Upper lobe of right lung (tissue), 1 donor: ENCODE measurements at regions of chr1 and their contacts with region 1.

Region 1: DNA sequence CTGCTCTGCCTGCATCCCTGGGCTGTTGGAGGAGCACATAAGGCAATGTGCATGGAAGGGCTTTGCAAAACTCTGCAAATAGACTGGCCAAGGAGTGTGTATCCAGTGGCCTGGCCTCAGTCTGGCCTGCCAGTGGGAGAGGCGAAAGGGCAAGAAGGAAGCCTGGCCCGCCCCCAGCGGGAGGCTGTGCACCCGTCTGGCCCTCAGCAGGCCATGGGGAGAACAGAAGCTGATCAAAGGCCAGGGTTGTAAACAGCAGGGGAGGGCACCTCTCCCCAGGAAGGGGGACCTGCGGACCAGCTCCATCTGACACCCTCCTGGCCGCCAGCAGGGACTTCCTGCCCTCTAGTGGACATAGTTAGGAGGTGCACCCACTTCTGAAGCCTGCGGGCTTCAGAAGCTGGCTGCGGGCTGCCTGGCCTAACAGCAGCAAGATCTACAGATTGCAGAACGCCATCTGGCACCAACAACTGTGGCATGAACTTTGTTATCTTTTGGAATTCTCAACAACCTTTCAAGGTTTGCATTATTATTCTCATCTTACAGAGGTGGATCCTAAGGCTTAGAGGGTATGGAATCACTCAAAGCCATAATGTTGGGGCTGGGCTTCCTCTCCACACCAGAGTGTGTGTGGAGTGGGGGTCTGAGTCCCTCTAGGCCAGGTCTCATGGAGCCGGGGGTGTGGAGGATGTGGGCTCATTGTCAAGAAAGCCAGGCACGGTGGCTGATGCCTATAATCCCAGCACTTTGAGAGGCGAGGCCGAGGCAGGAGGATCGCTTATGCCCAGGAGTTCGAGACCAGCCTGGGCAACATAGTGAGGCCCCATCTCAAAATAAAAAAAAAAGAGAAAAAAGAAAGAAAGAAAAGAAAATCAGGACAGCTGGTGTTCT is 18.9 kb upstream of the CDK18 start:
- DNase-seq: peak; percentile 77
- ATAC-seq: peak; percentile 91
- H3K4me3 ChIP-seq: no peak overlapping the region
- H3K27ac ChIP-seq: no peak overlapping the region
- H3K4me1 ChIP-seq: peaks cover 2% of the 10 kb centered on the region
- H3K27me3 ChIP-seq: peaks cover 25% of the 10 kb centered on the region
- CTCF ChIP-seq: peak; percentile 97

Region 2: DNA sequence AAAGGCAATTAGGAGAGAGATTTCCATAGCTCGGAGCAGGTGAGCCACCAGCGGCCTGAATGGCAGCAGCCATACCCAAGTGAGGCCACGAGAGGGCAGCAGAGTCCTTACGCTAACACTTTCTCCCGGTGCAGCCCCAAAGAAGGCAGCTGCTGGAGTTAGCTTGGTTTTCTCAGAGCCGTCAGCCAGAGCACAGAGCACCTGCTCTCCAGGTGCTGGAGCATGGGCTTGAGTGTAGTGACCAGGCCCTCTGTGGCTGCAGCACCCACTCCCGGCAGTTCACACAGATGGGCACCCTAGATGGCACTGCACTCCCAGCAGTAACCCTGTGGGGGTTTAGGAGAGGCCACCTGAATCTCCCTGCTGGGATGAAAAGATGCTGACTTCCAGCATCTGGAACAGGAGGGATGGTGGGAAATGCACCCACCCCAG is 212.0 kb before region 1 on chr1:
- intact Hi-C with region 1: loop called (anchors 10 kb)
- DNase-seq: peak; percentile 90
- ATAC-seq: peak; percentile 90
- H3K4me3 ChIP-seq: no peak overlapping the region
- H3K27ac ChIP-seq: no peak overlapping the region
- H3K4me1 ChIP-seq: peaks cover 16% of the 10 kb centered on the region
- H3K27me3 ChIP-seq: no peaks in the 10 kb centered on the region
- CTCF ChIP-seq: peak; percentile 99

Region 3: DNA sequence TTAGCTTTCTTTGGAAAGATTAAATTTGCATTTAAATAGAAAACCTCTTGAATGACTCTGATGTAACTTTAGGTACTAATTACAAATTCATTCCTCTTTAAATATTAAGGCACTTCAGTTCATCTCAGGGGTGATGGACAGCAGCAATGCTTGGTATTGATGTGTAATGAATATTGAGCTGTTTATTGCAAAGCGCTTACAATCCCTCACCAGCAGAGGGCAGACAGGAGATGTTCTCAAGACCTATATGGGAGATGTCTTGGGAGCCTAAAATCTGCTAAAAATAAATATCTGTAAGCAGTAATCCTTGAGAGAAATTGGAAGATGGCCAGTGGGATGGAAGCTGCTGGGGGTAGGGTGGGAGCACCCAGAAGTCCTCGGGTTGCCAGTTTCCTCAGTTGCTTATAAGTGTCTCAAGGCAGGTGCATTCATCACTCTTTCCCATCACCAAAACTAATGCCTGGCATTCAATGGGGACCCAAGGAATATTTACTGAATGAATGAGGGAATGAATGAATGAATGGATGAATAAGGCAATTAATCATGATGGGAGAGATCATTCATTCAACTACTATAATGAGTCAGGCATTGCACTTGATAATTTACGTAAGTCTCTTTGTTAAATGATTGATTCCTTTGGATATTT is 131.2 kb before region 1 on chr1:
- intact Hi-C with region 1: loop called (anchors 10 kb)
- DNase-seq: no peak
- ATAC-seq: peak; percentile 62
- H3K4me3 ChIP-seq: no peak overlapping the region
- H3K27ac ChIP-seq: no peak overlapping the region
- H3K4me1 ChIP-seq: no peaks in the 10 kb centered on the region
- H3K27me3 ChIP-seq: peaks cover 20% of the 10 kb centered on the region
- CTCF ChIP-seq: peak; percentile 89

Region 4: DNA sequence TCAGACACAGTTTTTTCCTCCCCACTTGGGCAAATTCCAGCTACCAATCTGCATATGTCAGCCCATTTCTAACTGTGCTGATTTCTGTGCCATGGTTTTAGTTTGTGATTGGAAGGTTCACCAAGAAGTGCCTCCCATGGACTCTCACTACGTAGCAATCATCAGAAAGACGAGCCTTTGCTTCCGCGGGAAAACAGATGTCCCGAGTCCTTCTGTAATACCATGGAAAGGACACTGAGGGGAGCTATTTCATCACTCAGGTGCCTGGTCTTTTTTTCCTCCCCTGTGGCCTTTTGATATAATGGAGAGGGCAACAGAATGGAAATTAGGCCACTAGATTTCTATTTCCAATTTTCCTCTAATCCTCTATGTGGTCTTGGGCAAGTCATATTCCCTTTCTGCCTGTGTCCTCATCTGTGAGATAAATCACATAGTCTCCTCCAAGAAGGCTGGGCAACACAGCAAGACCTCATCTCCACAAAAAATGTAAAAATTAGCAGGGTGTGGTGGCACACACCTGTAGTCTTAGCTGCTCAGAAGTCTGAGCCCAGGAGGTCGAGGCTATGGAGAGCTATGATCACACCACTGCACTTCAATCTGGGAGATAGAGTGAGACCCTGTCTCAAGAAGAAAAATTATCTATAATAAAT is 88.5 kb before region 1 on chr1:
- intact Hi-C with region 1: loop called (anchors 10 kb)
- DNase-seq: no peak
- ATAC-seq: peak; percentile 88
- H3K4me3 ChIP-seq: no peak overlapping the region
- H3K27ac ChIP-seq: no peak overlapping the region
- H3K4me1 ChIP-seq: no peaks in the 10 kb centered on the region
- H3K27me3 ChIP-seq: no peaks in the 10 kb centered on the region
- CTCF ChIP-seq: peak; percentile 67

Region 5: DNA sequence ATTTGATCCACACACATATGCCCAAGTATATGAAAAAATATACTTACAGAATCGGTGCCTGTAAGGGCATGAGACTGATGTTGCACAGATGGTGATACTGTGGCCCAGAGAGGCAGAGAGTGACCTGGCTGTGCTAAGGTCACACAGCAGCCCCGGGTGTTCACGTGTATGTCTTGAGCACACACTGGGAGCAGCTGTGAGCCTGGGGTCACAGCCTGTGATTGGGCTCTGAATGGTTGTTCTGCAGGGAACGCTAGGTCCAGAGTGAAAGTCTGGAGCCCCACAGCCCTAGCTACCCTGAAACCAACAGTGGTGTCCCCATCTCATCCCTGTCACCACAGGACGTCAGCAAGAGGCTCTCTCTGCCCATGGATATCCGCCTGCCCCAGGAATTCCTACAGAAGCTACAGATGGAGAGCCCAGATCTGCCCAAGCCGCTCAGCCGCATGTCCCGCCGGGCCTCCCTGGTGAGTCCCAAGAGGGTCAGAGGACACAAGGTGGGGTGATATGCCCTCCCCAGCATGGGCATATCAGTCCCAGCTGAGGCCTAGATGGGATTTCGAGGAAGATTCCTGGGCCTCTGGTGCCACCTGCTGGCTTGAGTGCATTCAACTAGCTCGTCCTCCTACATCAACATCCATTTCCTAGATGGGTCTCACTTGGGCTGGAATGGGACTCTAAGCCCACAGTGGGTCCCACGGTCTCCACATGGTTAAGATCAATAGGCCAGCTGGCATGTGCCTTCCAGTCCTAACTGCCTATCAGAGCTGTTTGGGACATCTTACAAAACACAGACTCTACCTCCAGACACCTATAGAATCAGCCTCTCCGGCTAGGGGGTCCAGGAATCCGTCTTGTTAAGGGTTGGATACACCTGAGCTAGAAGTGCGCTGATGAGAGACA is 38.6 kb after region 1 on chr1:
- intact Hi-C with region 1: loop called (anchors 5 kb)
- DNase-seq: peak; percentile 83
- ATAC-seq: peak; percentile 67
- H3K4me3 ChIP-seq: no peak overlapping the region
- H3K27ac ChIP-seq: no peak overlapping the region
- H3K4me1 ChIP-seq: no peaks in the 10 kb centered on the region
- H3K27me3 ChIP-seq: no peaks in the 10 kb centered on the region
- CTCF ChIP-seq: peak; percentile 76